Left cardiac atrium (tissue), 4 donors: ENCODE measurements at regions of chr11 and their contacts with region 1.

Region 1: DNA sequence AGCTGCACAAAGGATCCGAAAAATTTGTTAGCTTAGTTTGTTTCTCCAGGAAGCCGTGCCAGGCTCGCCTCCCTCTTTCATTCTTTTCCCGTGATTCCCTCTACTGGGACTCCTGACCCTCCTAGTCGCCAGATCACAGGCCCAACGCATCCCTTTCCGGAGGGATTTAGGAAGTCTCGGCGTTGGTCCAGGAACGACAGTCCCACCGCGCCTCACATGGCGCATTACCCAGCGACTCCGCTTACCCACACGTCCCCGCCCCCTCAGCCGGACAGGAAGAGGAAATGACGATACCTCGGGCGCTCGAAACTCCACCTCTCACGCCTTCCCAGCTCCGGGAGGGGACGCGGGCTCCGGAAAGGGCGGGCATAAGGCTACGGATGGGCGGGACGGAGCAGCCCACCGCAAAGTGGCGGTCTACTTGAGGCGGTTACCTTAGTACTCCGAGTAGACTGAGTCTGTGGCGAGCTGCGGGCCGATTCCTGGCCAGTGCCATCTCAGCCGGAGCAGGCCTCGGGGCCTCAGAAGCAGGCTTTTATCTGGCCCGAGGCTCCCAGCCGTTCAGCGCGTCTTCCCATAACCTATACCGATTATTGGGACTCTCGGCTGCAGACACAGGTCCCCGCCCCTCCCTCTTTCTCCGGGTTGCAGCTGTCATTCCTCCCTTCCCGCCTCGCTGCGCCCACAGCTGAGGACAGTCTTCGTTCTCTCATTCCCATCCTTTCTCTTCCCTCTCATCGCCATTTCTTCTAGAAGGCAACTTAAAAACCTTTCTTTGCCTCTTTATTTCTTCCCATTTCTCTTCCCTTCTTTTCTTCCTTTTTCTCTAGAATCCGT is at the start of gene CCDC15:
- DNase-seq: peak; percentile 99
- ATAC-seq: peak; percentile 100
- total RNA-seq, gene CCDC15: 0.31 to 0.82 TPM

Region 2: DNA sequence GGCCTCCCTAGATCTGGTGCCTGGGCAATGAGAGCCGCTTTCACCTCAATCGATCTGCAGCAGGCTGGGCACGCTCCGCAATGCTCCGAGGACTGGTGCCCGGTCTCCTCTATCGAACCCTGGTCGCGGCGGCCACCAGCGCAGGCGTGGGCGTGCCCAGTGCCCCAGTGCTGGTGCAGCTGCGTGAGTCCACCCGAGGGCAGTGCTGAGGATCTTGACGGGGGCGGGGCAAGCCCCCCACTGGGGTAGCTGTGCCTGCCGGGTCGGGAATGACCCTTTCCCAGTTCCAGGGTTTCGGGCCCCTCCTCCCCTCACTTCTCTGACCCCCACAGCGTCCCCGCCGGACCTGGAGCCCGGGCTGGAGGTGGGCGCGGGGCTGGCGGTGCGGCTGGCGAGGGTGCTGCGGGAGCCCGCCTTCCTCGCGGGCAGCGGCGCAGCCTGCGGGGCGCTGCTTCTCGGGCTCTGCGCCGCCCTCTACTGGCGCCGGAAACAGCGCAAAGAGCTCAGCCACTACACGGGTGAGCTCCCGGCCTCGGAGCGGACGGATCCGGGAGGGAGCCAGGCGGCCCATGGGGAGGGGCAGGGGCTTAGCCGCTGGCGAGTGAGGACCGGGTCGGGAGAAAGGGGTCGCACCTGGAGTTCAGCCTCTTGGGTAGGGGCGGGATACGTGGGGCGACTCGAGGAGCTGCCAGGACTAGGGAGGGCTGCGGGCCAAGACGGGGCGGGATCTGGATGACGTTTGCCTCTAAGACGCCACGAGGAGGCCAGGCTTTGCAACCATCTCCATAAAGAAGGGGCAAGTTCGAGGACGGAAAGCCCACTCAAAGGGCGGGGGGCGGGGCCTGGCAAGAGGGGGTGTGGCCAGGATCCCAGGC is 77.8 kb before region 1 on chr11:
- intact Hi-C with region 1: loop called in 1 of 2 experiments (anchors 5 kb)
- DNase-seq: peak; percentile 93
- ATAC-seq: peak; percentile 93 to 94

Region 3: GRCh38 chr11:125874556-125875124 is 920.7 kb after region 1 on chr11:
- intact Hi-C with region 1: loop called in 1 of 2 experiments (anchors 10 kb)
- DNase-seq: peak; percentile 43
- ATAC-seq: peak; percentile 94 to 97